HCT116 (cell line): ENCODE measurements at regions of chr1 and their contacts with region 1.

Region 1: GRCh38 chr1:84433258-84434080 is 35.2 kb downstream of the DNASE2B start:
- DNase-seq: peak; percentile 87
- ATAC-seq: peak; percentile 76
- H3K4me3 ChIP-seq: peak overlapping the region; percentile 2 to 42; a peak in 3 of 4 replicates
- H3K27ac ChIP-seq: peak overlapping the region; percentile 95
- H3K4me1 ChIP-seq: peaks cover 49 to 66% of the 10 kb centered on the region in 2 experiments
- H3K27me3 ChIP-seq: no peaks in the 10 kb centered on the region
- CTCF ChIP-seq: peak; percentile 65 to 86 (median 81)
- POLR2A ChIP-seq: no peak
- RAD21 ChIP-seq: peak; percentile 96

Region 2: DNA sequence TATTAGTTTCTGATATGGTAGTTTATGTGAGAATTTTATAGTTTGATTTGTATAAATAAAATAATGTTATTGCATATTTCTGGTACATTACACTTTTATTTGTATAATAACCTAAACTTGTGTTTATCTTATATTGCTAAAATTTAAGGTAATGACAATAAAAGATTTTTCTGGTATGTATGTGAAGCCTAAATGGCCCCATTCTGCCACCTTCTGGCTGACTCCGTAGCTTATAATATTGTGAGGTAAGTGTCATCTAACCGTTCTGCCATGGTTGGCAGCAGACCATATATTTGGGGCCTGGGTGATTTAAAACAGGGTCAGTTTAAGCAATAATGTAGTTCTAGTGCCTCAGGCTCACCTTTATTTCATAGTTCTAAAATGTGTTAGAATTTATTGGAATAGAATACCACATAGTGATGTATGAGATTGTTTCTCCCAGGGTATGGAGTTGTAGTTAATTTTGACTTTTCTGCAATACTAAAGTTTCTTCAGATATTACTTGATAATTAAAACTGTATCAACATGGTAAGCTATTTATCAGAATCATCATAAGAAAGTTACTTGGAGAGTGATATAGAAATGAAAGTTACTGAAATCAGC is 310.6 kb before region 1 on chr1:
- CTCF ChIA-PET with region 1: no interaction called
- POLR2A ChIA-PET with region 1: no interaction called
- RAD21 ChIA-PET with region 1: no interaction called
- intact Hi-C with region 1: no loop called
- DNase-seq: no peak
- ATAC-seq: peak; percentile 80
- H3K4me3 ChIP-seq: no peak overlapping the region
- H3K27ac ChIP-seq: no peak overlapping the region
- H3K4me1 ChIP-seq: peaks cover 0 to 3% of the 10 kb centered on the region in 2 experiments; a peak in 1 of 4 replicates
- H3K27me3 ChIP-seq: no peaks in the 10 kb centered on the region
- CTCF ChIP-seq: peak; percentile 61 to 82 (median 78)
- POLR2A ChIP-seq: no peak
- RAD21 ChIP-seq: peak; percentile 87

Region 3: GRCh38 chr1:84247425-84248220 is 185.8 kb before region 1 on chr1:
- CTCF ChIA-PET with region 1: no interaction called
- POLR2A ChIA-PET with region 1: interaction called, 3 read pairs
- RAD21 ChIA-PET with region 1: no interaction called
- intact Hi-C with region 1: loop called (anchors 2 kb)
- DNase-seq: peak; percentile 93
- ATAC-seq: peak; percentile 91
- H3K4me3 ChIP-seq: peak overlapping the region in 1 of 2 experiments; percentile 10; a peak in 3 of 4 replicates
- H3K27ac ChIP-seq: peak overlapping the region; percentile 95
- H3K4me1 ChIP-seq: peaks cover 40 to 47% of the 10 kb centered on the region in 2 experiments
- H3K27me3 ChIP-seq: no peaks in the 10 kb centered on the region
- CTCF ChIP-seq: no peak
- POLR2A ChIP-seq: no peak
- RAD21 ChIP-seq: peak; percentile 36

Region 4: GRCh38 chr1:84347932-84348555 is 85.4 kb before region 1 on chr1:
- CTCF ChIA-PET with region 1: no interaction called
- POLR2A ChIA-PET with region 1: interaction called, 4 read pairs
- RAD21 ChIA-PET with region 1: no interaction called
- intact Hi-C with region 1: loop called (anchors 5 kb)
- DNase-seq: peak; percentile 94
- ATAC-seq: peak; percentile 90
- H3K4me3 ChIP-seq: peak overlapping the region; percentile 24 to 48
- H3K27ac ChIP-seq: peak overlapping the region; percentile 97
- H3K4me1 ChIP-seq: peaks cover 79 to 82% of the 10 kb centered on the region in 2 experiments
- H3K27me3 ChIP-seq: no peaks in the 10 kb centered on the region
- CTCF ChIP-seq: no peak
- POLR2A ChIP-seq: peak; percentile 60
- RAD21 ChIP-seq: peak; percentile 33; the same call in 1 of the 2 replicates

Region 5: DNA sequence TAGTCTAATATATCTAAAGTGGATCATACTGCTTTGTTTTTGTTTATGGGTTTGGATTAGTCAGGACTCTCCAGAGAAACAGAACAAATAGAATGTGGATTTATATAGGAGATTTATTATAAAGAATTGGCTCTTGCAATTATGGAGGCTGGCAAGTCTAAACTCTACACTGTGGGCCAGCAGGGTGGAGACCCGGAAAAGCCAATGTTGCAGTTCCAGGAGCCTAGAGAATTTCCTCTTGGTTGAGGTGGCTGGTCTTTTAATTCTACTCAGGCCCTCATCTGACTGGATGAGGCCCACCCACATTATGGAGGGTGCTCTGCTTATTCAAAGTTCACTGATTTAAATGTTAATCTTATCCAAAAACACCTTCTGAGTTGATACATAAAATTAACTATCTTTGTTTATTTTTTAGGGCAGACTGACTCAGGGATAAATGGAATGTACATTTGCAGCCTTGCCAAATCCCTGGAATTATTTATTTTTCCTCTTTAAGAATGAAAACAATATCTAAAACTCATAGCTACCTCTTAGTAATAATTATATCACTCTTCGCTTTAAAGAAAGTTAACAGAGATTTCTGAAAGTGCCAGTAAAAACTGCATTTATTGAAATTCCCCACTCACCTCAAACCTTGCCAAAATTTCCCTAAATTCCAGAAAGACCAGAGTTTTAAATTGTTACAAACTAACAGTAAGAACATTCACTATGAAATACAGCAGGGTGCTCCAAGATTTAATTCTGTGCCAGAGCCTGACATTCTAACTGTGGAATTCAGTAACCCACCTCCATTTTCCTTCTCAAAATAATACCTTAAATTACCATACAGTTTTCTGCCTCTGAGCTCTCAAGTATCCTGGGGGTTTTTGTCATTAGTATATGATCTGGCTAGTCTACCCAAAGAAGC is 293.4 kb after region 1 on chr1:
- CTCF ChIA-PET with region 1: no interaction called
- POLR2A ChIA-PET with region 1: no interaction called
- RAD21 ChIA-PET with region 1: no interaction called
- intact Hi-C with region 1: no loop called
- DNase-seq: no peak
- ATAC-seq: no peak
- H3K4me3 ChIP-seq: no peak overlapping the region
- H3K27ac ChIP-seq: no peak overlapping the region
- H3K4me1 ChIP-seq: peaks cover 0 to 7% of the 10 kb centered on the region in 2 experiments; a peak in 1 of 4 replicates
- H3K27me3 ChIP-seq: no peaks in the 10 kb centered on the region
- CTCF ChIP-seq: no peak
- POLR2A ChIP-seq: no peak
- RAD21 ChIP-seq: no peak

Region 6: DNA sequence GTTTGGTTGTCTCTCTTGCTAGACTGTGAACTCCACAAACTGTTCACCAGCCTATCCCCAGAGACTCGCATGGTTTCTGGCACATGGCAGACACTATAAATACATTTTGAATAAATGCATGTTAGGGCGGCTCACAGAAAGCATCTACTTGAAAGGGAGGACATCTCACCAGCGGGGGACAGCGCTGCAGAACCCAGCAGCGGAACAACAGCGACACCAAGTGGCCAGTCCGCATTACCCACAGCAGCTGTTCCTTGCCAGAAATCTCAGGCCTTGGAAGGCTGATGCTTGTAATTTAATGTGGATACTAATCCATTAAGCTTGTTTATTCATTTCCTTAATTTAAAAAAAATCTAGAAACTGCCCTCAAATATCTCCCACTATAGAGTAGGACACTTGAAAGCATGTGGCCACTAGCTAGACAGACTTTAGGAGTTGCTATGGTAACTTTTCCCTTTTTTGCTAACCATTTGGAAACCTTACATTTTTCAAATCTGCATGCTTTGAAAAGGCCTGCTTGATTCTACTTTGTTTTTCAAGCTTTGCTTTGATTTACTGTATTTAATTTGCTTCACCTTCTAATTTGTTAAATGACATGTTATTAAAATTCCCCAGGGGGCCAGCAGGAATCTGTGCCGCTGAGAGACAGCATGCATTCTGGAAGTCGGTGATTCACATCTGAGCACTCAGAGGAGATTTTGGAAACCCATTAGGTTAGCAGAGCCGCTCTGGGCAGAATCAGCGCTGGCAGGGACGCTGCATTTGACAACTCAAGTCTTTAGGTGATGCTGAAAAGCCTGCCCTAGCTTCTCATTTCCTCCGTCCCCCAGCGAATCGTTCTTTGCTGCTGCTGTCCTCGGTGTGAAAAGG is 320.3 kb after region 1 on chr1:
- CTCF ChIA-PET with region 1: no interaction called
- POLR2A ChIA-PET with region 1: no interaction called
- RAD21 ChIA-PET with region 1: no interaction called
- intact Hi-C with region 1: loop called (anchors 5 kb)
- DNase-seq: peak; percentile 43
- ATAC-seq: peak; percentile 96
- H3K4me3 ChIP-seq: no peak overlapping the region
- H3K27ac ChIP-seq: no peak overlapping the region
- H3K4me1 ChIP-seq: 0 out of 4 replicates have a peak, but pooled peaks cover 0 to 4% of the 10 kb centered on the region in 2 experiments
- H3K27me3 ChIP-seq: no peaks in the 10 kb centered on the region
- CTCF ChIP-seq: peak; percentile 89 to 99 (median 96)
- POLR2A ChIP-seq: no peak
- RAD21 ChIP-seq: peak; percentile 98